ENCODE measurements at regions of chr9 and their contacts with region 1.

Region 1: GRCh38 chr9:917730-918129 is 58.7 kb upstream of the DMRT3 start:
- DNase-seq: no peak
- H3K4me3 ChIP-seq: no peak overlapping the region
- H3K27ac ChIP-seq: no peak overlapping the region
- H3K4me1 ChIP-seq: no peaks in the 10 kb centered on the region
- H3K27me3 ChIP-seq: no peaks in the 10 kb centered on the region
- CTCF ChIP-seq: no peak

Region 2: GRCh38 chr9:950139-950538 is 32.4 kb after region 1 on chr9:
- CTCF ChIA-PET with region 1: no interaction called
- dilution Hi-C with region 1: loop called (anchors 5 kb)
- in situ Hi-C with region 1: no loop called
- intact Hi-C with region 1: no loop called
- DNase-seq: no peak
- H3K4me3 ChIP-seq: no peak overlapping the region
- H3K27ac ChIP-seq: no peak overlapping the region
- H3K4me1 ChIP-seq: no peaks in the 10 kb centered on the region
- H3K27me3 ChIP-seq: peaks cover 9% of the 10 kb centered on the region
- CTCF ChIP-seq: no peak

Region 3: GRCh38 chr9:994005-994404 is 76.3 kb after region 1 on chr9:
- CTCF ChIA-PET with region 1: no interaction called
- dilution Hi-C with region 1: loop called (anchors 5 kb)
- in situ Hi-C with region 1: no loop called
- intact Hi-C with region 1: no loop called
- DNase-seq: no peak
- H3K4me3 ChIP-seq: no peak overlapping the region
- H3K27ac ChIP-seq: no peak overlapping the region
- H3K4me1 ChIP-seq: no peaks in the 10 kb centered on the region
- H3K27me3 ChIP-seq: no peaks in the 10 kb centered on the region
- CTCF ChIP-seq: no peak

Region 4: DNA sequence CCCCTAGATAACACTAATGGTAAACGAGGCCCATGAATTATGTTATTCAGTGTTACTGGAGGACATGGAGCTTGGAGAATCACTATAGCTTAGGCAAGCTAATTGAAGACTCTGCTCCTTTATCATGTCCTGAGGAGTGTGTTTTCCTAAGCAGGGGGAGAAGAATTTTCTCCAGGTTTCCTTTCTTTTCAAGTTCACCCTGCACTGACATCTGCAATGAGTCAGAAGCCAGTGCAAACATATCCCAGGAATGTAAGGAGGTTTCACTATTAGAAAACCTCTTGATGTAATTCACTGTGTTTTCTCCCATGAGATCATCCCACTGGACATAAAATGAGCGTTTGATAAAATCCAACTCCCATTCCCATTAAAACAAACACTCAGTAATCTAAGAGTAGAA is 208.0 kb after region 1 on chr9:
- CTCF ChIA-PET with region 1: no interaction called
- dilution Hi-C with region 1: no loop called
- in situ Hi-C with region 1: no loop called
- intact Hi-C with region 1: no loop called
- DNase-seq: peak; percentile 3
- H3K4me3 ChIP-seq: no peak overlapping the region
- H3K27ac ChIP-seq: no peak overlapping the region
- H3K4me1 ChIP-seq: no peaks in the 10 kb centered on the region
- H3K27me3 ChIP-seq: no peaks in the 10 kb centered on the region
- CTCF ChIP-seq: no peak

Measured in mammary epithelial cell (primary cell).